ENCODE measurements at regions of chr7 and their contacts with region 1.

Region 1: GRCh38 chr7:6008668-6009611 is at the starts of genes AIMP2 and PMS2:
- DNase-seq: peak; percentile 99
- ATAC-seq: peak; percentile 93
- H3K4me3 Mint-ChIP-seq: peak within 1 kb of the TSS; percentile 89
- H3K27ac Mint-ChIP-seq: peak within 1 kb of the TSS; percentile 93
- H3K4me1 Mint-ChIP-seq: peaks cover 52% of the 10 kb centered on the region
- H3K27me3 Mint-ChIP-seq: no peaks in the 10 kb centered on the region
- total RNA-seq, gene AIMP2: 34.8 to 45.6 TPM
- total RNA-seq, gene PMS2: 22.5 to 24.8 TPM

Region 2: DNA sequence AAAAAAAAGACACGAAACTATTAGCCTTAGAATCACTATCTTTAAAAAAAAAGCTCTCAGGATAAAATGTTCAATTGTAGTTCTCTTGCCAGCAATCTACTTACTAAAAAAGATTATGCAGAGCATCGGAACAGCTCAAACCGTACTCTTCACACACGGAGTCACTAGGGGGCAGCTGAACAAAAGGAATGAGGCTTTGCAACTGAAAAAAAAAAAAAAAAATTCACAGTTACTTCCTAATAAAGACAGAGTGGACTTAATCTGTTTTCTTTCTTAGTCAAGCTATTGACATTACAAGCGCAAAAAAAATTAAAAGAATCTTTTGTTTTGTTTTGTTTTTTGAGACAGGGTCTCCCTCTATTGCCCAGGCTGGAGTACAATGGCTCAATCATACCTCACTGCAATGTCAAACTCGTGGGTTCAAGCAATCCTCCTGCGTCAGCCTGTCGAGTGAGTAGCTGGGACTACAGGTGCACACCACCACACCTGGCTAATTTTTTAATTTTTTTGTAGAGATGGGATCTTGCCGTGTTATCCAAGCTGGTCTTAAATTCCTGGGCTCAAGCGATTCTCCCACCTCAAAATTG is 11.6 kb before region 1 on chr7:
- CTCF ChIA-PET with region 1: interaction called, 12 read pairs
- DNase-seq: peak; percentile 59
- ATAC-seq: peak; percentile 61
- H3K4me3 Mint-ChIP-seq: no peak overlapping the region
- H3K27ac Mint-ChIP-seq: no peak overlapping the region
- H3K4me1 Mint-ChIP-seq: no peaks in the 10 kb centered on the region
- H3K27me3 Mint-ChIP-seq: no peaks in the 10 kb centered on the region

Region 3: GRCh38 chr7:6026011-6026819 is 17.3 kb after region 1 on chr7:
- CTCF ChIA-PET with region 1: interaction called, 14 read pairs
- DNase-seq: peak; percentile 85
- ATAC-seq: peak; percentile 99
- H3K4me3 Mint-ChIP-seq: peak overlapping the region; percentile 51
- H3K27ac Mint-ChIP-seq: peak overlapping the region; percentile 85
- H3K4me1 Mint-ChIP-seq: peaks cover 22% of the 10 kb centered on the region
- H3K27me3 Mint-ChIP-seq: no peaks in the 10 kb centered on the region

Region 4: DNA sequence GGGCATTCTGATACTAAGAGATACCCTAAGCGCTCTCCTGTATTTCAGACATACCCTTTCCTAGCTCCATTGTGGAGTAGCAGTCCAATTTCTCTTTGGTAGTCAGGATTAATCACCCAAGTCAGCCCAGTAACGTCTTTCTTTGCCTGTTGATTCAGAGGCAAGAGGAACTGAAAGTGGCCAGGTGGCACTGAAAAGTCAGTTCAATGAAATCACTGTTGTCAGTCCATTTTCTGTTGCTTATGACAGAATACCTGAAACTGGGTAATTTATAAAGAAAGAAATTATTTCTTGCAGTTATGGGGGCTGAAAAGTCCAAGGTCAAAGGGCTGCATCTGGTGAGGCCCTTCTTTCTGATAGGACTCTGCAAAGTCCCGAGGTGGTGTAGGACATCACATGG is 62.5 kb after region 1 on chr7:
- CTCF ChIA-PET with region 1: no interaction called
- DNase-seq: no peak
- ATAC-seq: no peak
- H3K4me3 Mint-ChIP-seq: no peak overlapping the region
- H3K27ac Mint-ChIP-seq: no peak overlapping the region
- H3K4me1 Mint-ChIP-seq: no peaks in the 10 kb centered on the region
- H3K27me3 Mint-ChIP-seq: no peaks in the 10 kb centered on the region

Region 5: DNA sequence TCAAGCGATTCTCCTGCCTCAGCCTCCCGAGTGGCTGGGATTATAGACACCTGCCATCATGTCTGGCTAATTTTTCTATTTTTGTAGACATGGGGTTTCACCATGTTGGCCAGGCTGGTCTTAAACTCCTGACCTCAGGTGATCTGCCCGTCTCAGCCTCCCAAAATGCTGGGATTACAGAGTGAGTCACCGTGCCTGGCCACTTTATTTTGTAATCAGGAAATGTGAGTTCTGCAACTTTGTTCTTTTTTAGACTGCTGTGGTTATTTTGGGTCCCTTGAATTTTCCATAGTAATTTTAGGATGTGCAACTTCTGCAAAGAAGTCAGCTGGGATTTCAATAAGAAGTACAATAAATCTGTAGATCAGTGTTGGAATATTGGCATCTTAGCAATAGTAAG is 166.7 kb after region 1 on chr7:
- CTCF ChIA-PET with region 1: no interaction called
- DNase-seq: no peak
- ATAC-seq: no peak
- H3K4me3 Mint-ChIP-seq: no peak overlapping the region
- H3K27ac Mint-ChIP-seq: no peak overlapping the region
- H3K4me1 Mint-ChIP-seq: no peaks in the 10 kb centered on the region
- H3K27me3 Mint-ChIP-seq: no peaks in the 10 kb centered on the region

Region 6: DNA sequence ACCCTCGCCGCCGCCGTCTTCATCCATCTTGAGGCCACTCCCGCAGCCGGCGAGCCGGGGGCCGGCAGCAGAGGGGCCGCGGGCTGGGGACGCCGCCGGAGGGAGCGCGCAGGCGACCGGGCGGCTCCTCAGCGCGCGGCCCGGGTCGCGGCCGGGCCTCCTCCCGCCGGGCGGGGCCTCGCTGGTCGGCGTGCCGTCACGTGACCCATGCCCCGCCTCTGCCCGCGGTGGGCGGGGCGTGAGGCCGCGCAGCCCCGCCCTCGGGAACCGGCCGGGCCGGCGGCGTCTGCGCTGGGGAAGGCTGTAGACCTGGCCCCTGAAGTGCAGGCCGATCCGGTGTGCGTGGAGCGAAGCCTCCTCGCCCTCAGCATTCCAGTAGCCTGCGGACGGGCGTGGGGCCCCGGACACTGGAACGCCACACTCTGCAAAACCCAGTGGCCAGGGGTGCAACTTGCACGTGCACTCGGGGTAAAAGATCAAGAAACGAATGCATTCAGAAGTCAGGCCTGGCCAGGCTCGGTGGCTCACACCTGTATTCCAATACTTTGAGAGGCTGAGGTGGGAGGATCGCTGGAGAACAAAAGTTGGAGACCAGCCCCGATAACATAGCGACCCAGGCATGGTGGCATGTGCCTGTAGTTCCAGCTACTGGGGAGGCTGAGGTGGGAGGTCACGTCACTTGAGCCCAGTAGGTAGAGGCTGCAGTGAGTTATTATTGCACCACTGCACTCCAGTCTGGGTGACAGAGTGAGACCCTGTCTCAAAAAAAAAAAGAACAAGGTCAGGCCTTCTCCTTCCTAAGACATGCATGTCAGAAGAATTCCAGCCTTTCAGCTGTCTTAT is 263.8 kb after region 1 on chr7 and contains the start of gene CYTH3:
- CTCF ChIA-PET with region 1: no interaction called
- DNase-seq: peak; percentile 75
- ATAC-seq: peak; percentile 95
- H3K4me3 Mint-ChIP-seq: peak within 1 kb of the TSS; percentile 77
- H3K27ac Mint-ChIP-seq: no peak within 1 kb of the TSS
- H3K4me1 Mint-ChIP-seq: peaks cover 17% of the 10 kb centered on the region
- H3K27me3 Mint-ChIP-seq: peaks cover 58% of the 10 kb centered on the region
- total RNA-seq, gene CYTH3: 0.73 to 1.3 TPM

Region 7: GRCh38 chr7:6283391-6284390 is 274.8 kb after region 1 on chr7:
- CTCF ChIA-PET with region 1: no interaction called
- DNase-seq: no peak
- ATAC-seq: no peak
- H3K4me3 Mint-ChIP-seq: no peak overlapping the region
- H3K27ac Mint-ChIP-seq: no peak overlapping the region
- H3K4me1 Mint-ChIP-seq: peaks cover 1% of the 10 kb centered on the region
- H3K27me3 Mint-ChIP-seq: no peaks in the 10 kb centered on the region

Measured in activated CD8-positive, alpha-beta memory T cell treated with anti-CD3 and anti-CD28 coated beads, Interleukin-2, amount 10 ng/mL, durations not matched to agents 7 days and 5 days (primary cell).